Common myeloid progenitor, CD34-positive (primary cell): ENCODE measurements at regions of chr6 and their contacts with region 1.

Region 1: DNA sequence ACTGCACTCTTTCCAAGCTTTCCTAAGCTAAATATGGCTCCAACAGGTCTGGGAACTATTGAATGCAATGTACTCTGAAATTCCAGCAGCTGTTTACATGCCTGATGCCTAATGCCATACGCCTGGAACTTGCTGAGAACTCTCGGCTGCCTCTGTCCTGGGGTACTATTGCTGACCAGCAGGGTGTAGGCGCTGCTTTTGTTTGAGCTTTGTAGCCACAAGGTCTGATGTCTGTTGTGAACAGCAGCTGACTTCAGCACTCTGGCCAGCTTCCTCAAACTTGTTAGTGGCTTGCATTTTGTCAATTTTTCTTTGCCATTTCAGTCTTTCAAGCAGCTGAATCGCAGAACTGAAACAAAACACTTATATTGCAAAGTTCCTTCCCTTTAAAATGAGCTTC is 26.7 kb downstream of the SAYSD1 start:
- DNase-seq: peak; percentile 72 to 91 (median 89)
- H3K4me3 ChIP-seq: no peak overlapping the region
- H3K27ac ChIP-seq: no peak overlapping the region
- H3K4me1 ChIP-seq: peaks cover 4 to 18% (median 11%) of the 10 kb centered on the region in 4 experiments
- H3K27me3 ChIP-seq: peaks cover 0 to 92% (median 38%) of the 10 kb centered on the region in 5 experiments

Region 2: GRCh38 chr6:38997128-38997761 is 91.1 kb before region 1 on chr6:
- CTCF ChIA-PET with region 1: interaction called, 51 read pairs
- POLR2A ChIA-PET with region 1: no interaction called
- DNase-seq: peak; percentile 60 to 80 (median 73)
- H3K4me3 ChIP-seq: no peak overlapping the region
- H3K27ac ChIP-seq: no peak overlapping the region
- H3K4me1 ChIP-seq: no peaks in the 10 kb centered on the region
- H3K27me3 ChIP-seq: peaks cover 12 to 45% (median 15%) of the 10 kb centered on the region in 5 experiments

Region 3: DNA sequence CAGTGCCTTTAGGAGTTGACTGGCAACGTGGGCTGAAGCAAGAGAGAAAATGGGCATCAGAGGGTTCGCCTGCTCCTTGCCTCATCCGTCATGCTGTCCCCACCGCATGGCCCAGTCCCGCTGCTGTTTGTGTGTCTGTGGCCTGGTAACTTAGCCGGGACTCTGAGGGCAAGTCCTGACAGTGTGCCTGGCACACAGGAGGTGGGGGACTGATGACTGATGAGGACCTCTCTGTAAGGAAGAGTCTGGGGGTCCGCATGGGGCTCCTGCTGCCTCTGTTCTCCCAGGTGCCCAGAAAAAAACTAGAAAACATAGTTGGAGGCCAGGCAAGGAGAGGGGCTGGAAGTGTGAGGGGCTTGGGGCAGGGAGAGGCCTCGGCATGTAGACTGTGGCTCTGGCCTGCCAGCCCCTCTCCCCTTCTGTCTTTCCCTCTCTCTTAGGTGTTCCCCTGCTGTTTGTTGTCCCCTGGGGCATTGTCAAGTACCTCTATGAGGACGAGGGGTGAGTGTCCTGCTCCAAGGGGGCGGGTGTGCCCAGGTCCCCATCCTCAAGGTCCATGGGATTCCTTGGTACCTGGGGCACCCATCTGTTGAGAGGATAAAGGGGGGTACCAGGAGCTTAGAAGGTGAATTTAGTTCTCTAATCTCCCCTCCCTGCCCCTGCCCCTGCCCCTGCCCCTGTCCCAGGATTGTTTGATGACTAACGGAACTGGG is 10.3 kb before region 1 on chr6:
- CTCF ChIA-PET with region 1: interaction called, 12 read pairs
- POLR2A ChIA-PET with region 1: no interaction called
- DNase-seq: no peak
- H3K4me3 ChIP-seq: no peak overlapping the region
- H3K27ac ChIP-seq: no peak overlapping the region
- H3K4me1 ChIP-seq: no peaks in the 10 kb centered on the region
- H3K27me3 ChIP-seq: peaks cover 0 to 61% (median 14%) of the 10 kb centered on the region in 5 experiments

Region 4: DNA sequence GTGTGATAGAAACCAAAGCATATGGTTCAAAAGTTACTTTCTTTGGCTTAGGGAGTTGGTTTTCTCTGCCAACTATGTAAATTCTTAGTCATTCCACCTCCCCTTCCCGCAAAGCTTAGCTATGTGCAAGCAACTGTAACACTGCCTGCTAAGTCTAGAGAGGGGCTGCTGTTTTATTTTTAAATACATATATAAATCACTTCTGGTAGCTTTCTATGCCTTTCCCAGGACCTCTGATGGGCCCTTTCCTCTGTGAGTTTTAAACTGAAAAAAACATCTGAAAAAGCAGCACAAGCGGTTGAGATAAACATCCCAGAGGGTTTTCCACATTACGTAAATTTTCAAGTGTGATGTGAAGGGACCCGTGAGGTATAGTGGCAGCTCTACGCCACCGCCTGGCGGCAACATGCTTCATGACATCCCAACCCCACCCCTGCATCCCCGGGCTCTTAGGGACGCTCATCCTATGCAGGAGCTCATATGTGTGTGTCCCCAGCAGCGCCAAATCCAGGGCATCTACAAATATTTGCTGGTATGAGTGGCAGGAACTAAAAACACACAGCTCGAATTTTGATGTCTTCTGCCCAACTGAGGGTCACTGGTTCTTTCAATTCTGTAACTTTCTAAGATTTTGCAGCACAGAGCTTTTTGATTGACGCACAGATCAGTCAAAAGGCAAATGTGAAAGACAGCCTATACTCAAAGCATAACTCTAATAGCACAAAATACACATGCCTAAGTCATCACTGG is 13.9 kb after region 1 on chr6:
- CTCF ChIA-PET with region 1: interaction called, 42 read pairs
- POLR2A ChIA-PET with region 1: no interaction called
- DNase-seq: peak; percentile 36 to 73 (median 67)
- H3K4me3 ChIP-seq: no peak overlapping the region
- H3K27ac ChIP-seq: no peak overlapping the region
- H3K4me1 ChIP-seq: peaks cover 0 to 3% (median 0%) of the 10 kb centered on the region in 4 experiments
- H3K27me3 ChIP-seq: peaks cover 2 to 22% (median 10%) of the 10 kb centered on the region in 5 experiments

Region 5: DNA sequence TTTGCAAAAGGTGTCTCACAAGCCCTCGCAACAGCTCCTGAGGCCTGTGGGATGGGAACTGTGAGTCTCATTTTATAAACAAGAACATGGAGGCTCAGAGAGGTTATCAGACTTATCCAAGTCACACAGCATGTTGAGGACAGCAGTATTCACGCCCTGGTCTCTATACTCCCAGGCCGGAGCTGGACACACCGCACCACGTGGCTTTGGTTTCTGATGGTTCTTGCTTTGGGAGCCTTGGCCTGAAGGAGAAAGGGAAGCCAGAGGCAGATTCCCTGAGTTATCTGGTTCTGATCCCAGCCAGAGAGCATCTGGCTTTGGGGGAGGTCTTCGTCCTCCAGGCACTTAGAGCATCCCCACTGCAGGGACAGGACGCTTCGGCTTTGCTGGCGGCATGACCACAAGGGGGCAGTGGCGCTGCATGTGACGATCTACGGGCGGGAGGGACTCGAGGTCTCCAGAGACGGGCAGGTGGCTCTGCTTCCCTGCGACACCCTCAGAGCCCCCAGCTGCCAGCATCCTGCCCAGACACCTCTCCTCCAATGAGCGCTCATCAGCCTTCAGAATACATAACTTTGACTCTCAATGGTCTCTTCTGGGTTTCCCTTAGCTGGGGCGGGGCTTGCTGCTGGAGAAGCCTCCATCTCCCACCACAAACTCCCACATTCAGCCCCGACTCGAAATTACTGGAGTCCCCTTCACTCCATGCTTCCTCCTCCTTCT is 78.0 kb after region 1 on chr6:
- CTCF ChIA-PET with region 1: interaction called, 13 read pairs
- POLR2A ChIA-PET with region 1: no interaction called
- DNase-seq: peak; percentile 73 to 89 (median 86)
- H3K4me3 ChIP-seq: no peak overlapping the region
- H3K27ac ChIP-seq: no peak overlapping the region
- H3K4me1 ChIP-seq: peaks cover 0 to 6% (median 1%) of the 10 kb centered on the region in 4 experiments
- H3K27me3 ChIP-seq: peaks cover 0 to 13% (median 0%) of the 10 kb centered on the region in 5 experiments